ENCODE measurements at regions of chr12 and their contacts with region 1.

Region 1: GRCh38 chr12:452667-453210 is 7.0 kb upstream of the B4GALNT3 start:
- DNase-seq: no peak
- ATAC-seq: peak; percentile 92
- H3K4me3 ChIP-seq: no peak overlapping the region
- H3K27ac ChIP-seq: no peak overlapping the region
- H3K4me1 ChIP-seq: no peaks in the 10 kb centered on the region
- H3K27me3 ChIP-seq: peaks cover 0 to 4% of the 10 kb centered on the region in 2 experiments; a peak in 2 of 4 replicates
- CTCF ChIP-seq: peak in 2 of 3 experiments; percentile 44 to 65; a peak in 4 of 6 replicates
- EP300 ChIP-seq: no peak
- POLR2A ChIP-seq: no peak
- RAD21 ChIP-seq: no peak

Region 2: DNA sequence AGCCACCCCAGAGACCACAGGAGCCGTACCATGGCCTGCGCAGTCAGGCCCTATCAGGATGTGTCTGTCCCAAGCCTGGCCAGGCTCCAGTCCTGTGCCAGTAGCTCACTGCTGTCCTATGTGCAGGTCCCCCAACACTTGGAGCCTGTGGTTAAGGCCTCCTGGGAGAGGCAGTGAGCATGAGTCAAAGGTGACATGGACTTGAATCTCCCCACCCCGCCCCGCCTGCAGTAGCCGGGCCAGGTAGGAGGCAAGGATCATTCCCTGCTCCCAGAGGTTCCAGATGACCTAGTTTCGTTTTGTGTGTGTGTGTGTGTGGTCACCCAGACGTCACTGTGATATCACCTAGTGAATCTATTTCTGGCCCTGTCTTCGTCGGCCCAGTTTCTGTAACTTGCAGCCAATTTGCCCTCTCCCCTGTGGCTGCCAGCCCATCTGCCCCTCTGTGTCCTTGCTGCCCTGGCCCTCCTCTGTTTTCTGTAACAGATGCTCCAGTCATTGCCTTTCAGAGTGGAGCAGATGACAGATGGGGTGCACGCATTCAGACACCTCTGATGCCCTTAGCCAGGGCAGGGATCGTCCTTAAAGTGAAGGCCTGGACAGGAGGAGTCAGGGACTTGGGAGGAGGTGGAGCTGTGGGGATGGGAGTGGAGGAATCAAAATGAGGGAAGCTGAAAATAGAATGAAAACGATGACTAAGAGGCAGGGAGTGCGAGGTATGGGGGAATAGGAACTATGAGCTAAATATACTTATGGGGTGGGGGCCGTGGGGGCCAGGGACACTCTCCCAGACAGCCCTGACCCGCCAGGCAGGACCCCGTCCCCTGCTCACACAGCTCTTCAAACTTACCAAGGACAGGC is 276.2 kb before region 1 on chr12:
- CTCF ChIA-PET with region 1: no interaction called
- POLR2A ChIA-PET with region 1: no interaction called
- RAD21 ChIA-PET with region 1: no interaction called
- SMC1A ChIA-PET with region 1: no interaction called
- in situ Hi-C with region 1: no loop called
- intact Hi-C with region 1: no loop called
- DNase-seq: no peak
- ATAC-seq: peak; percentile 36
- H3K4me3 ChIP-seq: no peak overlapping the region
- H3K27ac ChIP-seq: no peak overlapping the region
- H3K4me1 ChIP-seq: peaks cover 5% of the 10 kb centered on the region
- H3K27me3 ChIP-seq: no peaks in the 10 kb centered on the region; a peak in 2 of 4 replicates
- CTCF ChIP-seq: no peak
- EP300 ChIP-seq: no peak
- POLR2A ChIP-seq: no peak
- RAD21 ChIP-seq: no peak

Region 3: DNA sequence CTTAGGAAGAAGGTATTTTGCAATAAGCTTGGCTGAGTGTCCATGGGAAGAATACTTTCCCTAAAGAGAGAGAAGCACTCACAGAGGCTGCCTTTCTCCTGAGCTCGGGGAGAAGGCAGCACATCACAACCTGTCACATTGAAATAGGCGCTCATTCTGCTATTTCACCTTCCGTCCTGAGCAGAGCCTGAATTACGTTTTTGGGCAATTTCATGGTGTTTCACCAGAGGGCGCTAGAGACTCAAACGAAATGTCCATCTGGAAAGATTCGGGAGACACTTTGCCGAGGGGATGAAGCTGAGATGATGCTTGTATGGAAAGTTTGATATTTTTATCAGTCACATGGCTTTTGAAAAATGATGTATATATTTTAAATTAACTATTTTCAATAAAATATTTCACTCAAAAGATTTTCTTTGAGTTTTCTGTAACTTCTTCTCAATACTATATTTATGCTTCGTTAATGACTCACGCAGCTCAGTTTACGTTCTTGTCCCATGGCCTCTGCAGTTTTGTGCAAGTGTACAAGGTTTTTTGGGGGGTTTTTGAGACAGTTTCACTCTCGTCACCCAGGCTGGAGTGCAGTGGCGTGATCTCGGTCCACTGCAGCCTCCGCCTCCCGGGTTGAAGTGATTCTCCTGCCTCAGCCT is 10.4 kb before region 1 on chr12:
- CTCF ChIA-PET with region 1: interaction called, 33 read pairs
- POLR2A ChIA-PET with region 1: no interaction called
- RAD21 ChIA-PET with region 1: no interaction called
- SMC1A ChIA-PET with region 1: interaction called, 3 read pairs
- in situ Hi-C with region 1: no loop called
- intact Hi-C with region 1: no loop called
- DNase-seq: no peak
- ATAC-seq: no peak
- H3K4me3 ChIP-seq: no peak overlapping the region
- H3K27ac ChIP-seq: no peak overlapping the region
- H3K4me1 ChIP-seq: no peaks in the 10 kb centered on the region
- H3K27me3 ChIP-seq: no peaks in the 10 kb centered on the region
- CTCF ChIP-seq: peak; percentile 55 to 68 (median 68)
- EP300 ChIP-seq: no peak
- POLR2A ChIP-seq: no peak
- RAD21 ChIP-seq: peak; percentile 15; the same call in 1 of the 2 replicates

Region 4: DNA sequence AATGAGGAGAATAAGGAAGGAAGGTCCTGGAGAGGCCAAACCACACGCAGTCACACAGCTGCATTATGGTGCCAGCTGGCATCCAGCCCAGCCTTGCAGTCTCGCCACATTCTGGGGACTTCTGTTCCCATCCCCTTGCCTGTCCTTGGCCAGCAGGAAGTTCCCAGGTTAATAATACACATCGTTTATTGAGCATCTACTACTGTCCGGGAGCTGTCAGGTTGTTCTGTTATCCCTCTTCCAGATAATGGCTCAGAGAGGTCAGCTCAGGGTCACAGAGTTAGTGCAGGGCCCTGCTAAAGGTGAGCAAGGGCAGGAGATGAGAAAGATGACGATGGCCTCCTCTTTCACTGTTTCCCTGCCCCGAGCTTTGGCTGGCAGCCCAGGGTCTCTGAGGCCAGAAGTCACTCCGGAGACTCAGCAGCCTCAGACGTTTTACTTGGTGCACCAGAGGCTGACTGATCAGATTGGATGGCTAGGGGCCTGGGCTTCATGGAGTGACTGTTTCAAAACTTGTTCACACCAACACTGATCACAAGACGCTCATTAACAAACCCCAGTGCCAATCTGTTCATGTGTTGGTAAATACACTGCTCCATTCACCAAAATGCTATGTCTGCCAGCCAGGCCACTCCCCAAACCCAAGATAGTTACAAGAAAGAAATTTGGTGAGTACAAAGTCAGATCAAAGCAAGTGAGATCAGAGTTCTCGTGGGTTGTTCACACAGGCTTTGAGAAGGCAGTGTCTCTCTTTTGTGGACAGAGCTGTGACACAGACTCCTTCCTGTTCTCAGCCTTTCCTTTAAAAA is 86.2 kb after region 1 on chr12:
- CTCF ChIA-PET with region 1: interaction called, 55 read pairs
- POLR2A ChIA-PET with region 1: no interaction called
- RAD21 ChIA-PET with region 1: interaction called, 3 read pairs
- SMC1A ChIA-PET with region 1: no interaction called
- in situ Hi-C with region 1: no loop called
- intact Hi-C with region 1: loop called (anchors 5 kb)
- DNase-seq: no peak
- ATAC-seq: no peak
- H3K4me3 ChIP-seq: no peak overlapping the region
- H3K27ac ChIP-seq: no peak overlapping the region
- H3K4me1 ChIP-seq: no peaks in the 10 kb centered on the region
- H3K27me3 ChIP-seq: peaks cover 0 to 2% of the 10 kb centered on the region in 2 experiments; a peak in 3 of 4 replicates
- CTCF ChIP-seq: no peak
- EP300 ChIP-seq: no peak
- POLR2A ChIP-seq: no peak
- RAD21 ChIP-seq: no peak

Region 5: GRCh38 chr12:818733-819132 is 366.0 kb after region 1 on chr12:
- CTCF ChIA-PET with region 1: no interaction called
- POLR2A ChIA-PET with region 1: no interaction called
- RAD21 ChIA-PET with region 1: no interaction called
- SMC1A ChIA-PET with region 1: no interaction called
- in situ Hi-C with region 1: no loop called
- intact Hi-C with region 1: no loop called
- DNase-seq: no peak
- ATAC-seq: no peak
- H3K4me3 ChIP-seq: no peak overlapping the region
- H3K27ac ChIP-seq: no peak overlapping the region
- H3K4me1 ChIP-seq: peaks cover 7% of the 10 kb centered on the region; the same call in 1 of the 2 replicates
- H3K27me3 ChIP-seq: no peaks in the 10 kb centered on the region
- CTCF ChIP-seq: no peak
- EP300 ChIP-seq: no peak
- POLR2A ChIP-seq: no peak
- RAD21 ChIP-seq: no peak